ENCODE measurements at regions of chr19 and their contacts with region 1.

Region 1: GRCh38 chr19:11293433-11294389 is 2.2 kb upstream of the TSPAN16 start:
- DNase-seq: peak; percentile 99
- H3K4me3 ChIP-seq: peak overlapping the region; percentile 29 to 37 (median 36)
- H3K27ac ChIP-seq: peak overlapping the region; percentile 45 to 63 (median 58)
- H3K4me1 ChIP-seq: peaks cover 6 to 26% (median 16%) of the 10 kb centered on the region in 4 donors
- H3K27me3 ChIP-seq: no peaks in the 10 kb centered on the region
- CTCF ChIP-seq: peak in 2 of 3 experiments; percentile 99 to 100
- EP300 ChIP-seq: no peak
- POLR2A ChIP-seq: no peak

Region 2: GRCh38 chr19:11234486-11235075 is 59.1 kb before region 1 on chr19:
- intact Hi-C with region 1: no loop called
- DNase-seq: no peak
- H3K4me3 ChIP-seq: no peak overlapping the region
- H3K27ac ChIP-seq: no peak overlapping the region
- H3K4me1 ChIP-seq: no peaks in the 10 kb centered on the region
- H3K27me3 ChIP-seq: no peaks in the 10 kb centered on the region
- CTCF ChIP-seq: no peak
- EP300 ChIP-seq: no peak
- POLR2A ChIP-seq: no peak

Region 3: GRCh38 chr19:11380653-11381534 is 87.2 kb after region 1 on chr19:
- intact Hi-C with region 1: loop called (anchors 5 kb)
- DNase-seq: peak; percentile 99
- H3K4me3 ChIP-seq: peak overlapping the region; percentile 60 to 78 (median 64)
- H3K27ac ChIP-seq: peak overlapping the region; percentile 79 to 86 (median 82)
- H3K4me1 ChIP-seq: peaks cover 46 to 71% (median 68%) of the 10 kb centered on the region in 4 donors
- H3K27me3 ChIP-seq: peaks cover 0 to 30% (median 23%) of the 10 kb centered on the region in 4 donors
- CTCF ChIP-seq: peak; percentile 60 to 79 (median 78)
- EP300 ChIP-seq: no peak
- POLR2A ChIP-seq: peak; percentile 39

Region 4: DNA sequence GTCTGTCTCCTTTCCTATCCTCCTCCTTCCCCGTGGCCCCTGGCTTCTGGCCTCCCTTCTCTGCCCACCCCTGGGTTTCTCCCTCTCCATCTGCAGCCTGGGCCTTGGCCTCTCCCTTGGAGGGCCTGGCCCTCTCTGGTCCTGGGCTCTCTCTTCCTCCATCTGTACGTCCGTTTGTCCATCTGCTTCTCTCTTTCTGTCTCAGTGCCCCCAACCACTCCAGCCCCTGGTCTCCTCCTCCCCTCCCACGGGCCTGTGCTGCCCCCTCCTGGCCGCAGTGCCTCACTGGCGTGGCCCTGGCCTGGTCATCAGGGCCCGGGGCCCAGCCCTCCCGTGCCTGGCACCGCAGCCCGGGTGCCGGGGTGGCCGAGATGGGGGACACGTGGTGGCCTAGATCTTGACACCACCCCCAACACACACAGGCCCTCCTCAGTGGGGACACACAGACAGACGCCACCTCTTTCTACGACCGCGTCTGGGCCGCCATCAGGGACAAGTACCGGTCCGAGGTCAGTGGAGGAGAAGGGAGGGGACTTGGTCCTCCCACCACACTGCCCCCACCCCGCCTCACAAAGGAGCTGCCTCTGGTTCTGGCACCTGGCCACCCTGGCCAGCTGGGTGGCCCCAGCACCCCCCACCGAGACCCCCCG is 153.1 kb after region 1 on chr19:
- intact Hi-C with region 1: loop called (anchors 2 kb)
- DNase-seq: no peak
- H3K4me3 ChIP-seq: no peak overlapping the region
- H3K27ac ChIP-seq: no peak overlapping the region
- H3K4me1 ChIP-seq: peaks cover 0 to 4% (median 0%) of the 10 kb centered on the region in 4 donors
- H3K27me3 ChIP-seq: peaks cover 0 to 4% (median 0%) of the 10 kb centered on the region in 4 donors
- CTCF ChIP-seq: peak; percentile 64 to 85 (median 79)
- EP300 ChIP-seq: no peak
- POLR2A ChIP-seq: no peak

Region 5: DNA sequence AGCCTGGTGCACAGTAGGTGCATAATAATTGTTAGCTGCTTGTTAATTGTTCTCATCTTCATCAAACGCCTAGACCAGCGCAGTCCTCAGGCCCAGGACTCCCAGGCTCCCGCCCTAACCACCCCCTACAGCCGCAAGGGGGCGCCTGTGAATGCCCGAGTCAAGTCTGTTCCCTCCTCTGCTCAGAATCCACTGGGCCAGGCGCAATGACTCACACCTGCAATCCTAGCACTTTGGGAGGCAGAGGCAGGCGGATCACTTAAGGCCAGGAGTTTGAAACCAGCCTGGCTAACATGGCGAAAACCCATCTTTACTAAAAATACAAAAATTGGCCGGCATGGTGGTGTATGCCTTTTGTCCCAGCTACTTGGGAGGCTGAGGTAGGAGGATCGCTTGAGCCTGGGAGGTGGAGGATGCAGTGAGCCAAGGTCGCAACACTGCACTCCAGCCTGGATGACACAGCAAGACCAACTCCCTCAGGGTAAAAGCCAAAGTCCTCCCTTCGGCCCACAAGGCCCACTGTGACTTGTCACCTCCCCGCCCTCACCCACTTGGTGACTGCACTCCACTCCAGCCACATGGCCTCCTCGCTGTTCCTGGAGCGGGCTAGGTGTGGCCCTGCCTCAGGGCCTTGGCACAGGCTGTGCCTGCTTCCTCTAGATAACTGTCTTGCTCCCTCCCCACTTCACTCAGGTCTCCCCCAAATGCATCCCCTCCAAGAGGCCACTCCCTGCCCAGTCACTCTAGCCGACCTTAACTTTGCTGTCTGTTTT is 202.9 kb after region 1 on chr19:
- intact Hi-C with region 1: no loop called
- DNase-seq: no peak
- H3K4me3 ChIP-seq: no peak overlapping the region
- H3K27ac ChIP-seq: no peak overlapping the region
- H3K4me1 ChIP-seq: peaks cover 0 to 5% (median 4%) of the 10 kb centered on the region in 4 donors
- H3K27me3 ChIP-seq: no peaks in the 10 kb centered on the region
- CTCF ChIP-seq: peak; percentile 53 to 74 (median 68)
- EP300 ChIP-seq: no peak
- POLR2A ChIP-seq: no peak

Region 6: GRCh38 chr19:11587302-11587974 is 293.7 kb after region 1 on chr19:
- intact Hi-C with region 1: loop called (anchors 5 kb)
- DNase-seq: peak; percentile 93
- H3K4me3 ChIP-seq: no peak overlapping the region
- H3K27ac ChIP-seq: no peak overlapping the region
- H3K4me1 ChIP-seq: peaks cover 0 to 5% (median 2%) of the 10 kb centered on the region in 4 donors
- H3K27me3 ChIP-seq: no peaks in the 10 kb centered on the region
- CTCF ChIP-seq: peak; percentile 82 to 97 (median 91)
- EP300 ChIP-seq: no peak
- POLR2A ChIP-seq: no peak

Measured in esophagus muscularis mucosa (tissue), 4 donors.